ENCODE measurements at regions of chr6 and their contacts with region 1.

Region 1: GRCh38 chr6:29737707-29738630 is 14.7 kb downstream of the HLA-F start:
- H3K4me3 ChIP-seq: no peak overlapping the region
- H3K27ac ChIP-seq: no peak overlapping the region
- H3K4me1 ChIP-seq: no peaks in the 10 kb centered on the region
- CTCF ChIP-seq: peak; percentile 87

Region 2: GRCh38 chr6:29509239-29509638 is 228.7 kb before region 1 on chr6:
- CTCF ChIA-PET with region 1: no interaction called
- POLR2A ChIA-PET with region 1: no interaction called
- H3K4me3 ChIP-seq: no peak overlapping the region
- H3K27ac ChIP-seq: no peak overlapping the region
- H3K4me1 ChIP-seq: peaks cover 8% of the 10 kb centered on the region; the same call in 1 of the 2 replicates
- CTCF ChIP-seq: no peak

Region 3: DNA sequence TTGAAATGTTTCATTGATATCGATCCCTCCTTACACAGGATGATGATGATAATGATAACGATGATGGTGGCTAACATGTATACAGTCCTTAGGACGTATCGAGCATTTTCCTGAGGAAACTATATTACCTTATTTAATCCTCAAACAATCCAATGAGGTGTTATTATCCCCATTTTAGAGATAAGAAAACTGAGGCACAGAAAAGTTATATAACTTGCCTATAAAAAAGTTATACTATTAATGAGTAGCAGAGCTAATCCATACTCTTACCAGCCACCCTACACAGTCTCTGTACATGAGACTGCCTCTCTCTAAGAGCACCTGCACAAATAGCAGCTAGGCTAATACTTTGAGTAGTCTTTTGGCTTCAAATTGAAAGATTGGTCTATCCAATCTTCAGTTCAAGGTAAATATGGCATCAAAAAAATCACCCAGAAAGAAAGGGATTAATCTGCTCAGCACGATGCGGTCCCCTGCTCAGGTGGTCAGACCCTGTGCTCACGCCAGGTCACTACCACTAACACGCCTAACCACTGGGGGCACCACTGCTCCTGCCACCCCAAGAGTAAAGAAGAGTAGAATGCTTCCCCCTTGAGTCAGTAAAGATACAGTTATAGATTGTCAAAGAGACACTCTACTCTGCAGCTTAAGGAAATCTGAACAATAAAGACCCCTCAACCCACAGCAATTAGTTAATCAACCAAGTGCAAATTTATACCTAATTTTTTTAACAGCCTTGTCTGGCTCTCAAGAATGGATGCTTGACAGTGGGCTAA is 120.0 kb before region 1 on chr6:
- CTCF ChIA-PET with region 1: no interaction called
- POLR2A ChIA-PET with region 1: no interaction called
- H3K4me3 ChIP-seq: no peak overlapping the region
- H3K27ac ChIP-seq: no peak overlapping the region
- H3K4me1 ChIP-seq: no peaks in the 10 kb centered on the region
- CTCF ChIP-seq: no peak

Region 4: GRCh38 chr6:29720863-29721262 is 17.1 kb before region 1 on chr6:
- CTCF ChIA-PET with region 1: interaction called, 10 read pairs
- POLR2A ChIA-PET with region 1: no interaction called
- H3K4me3 ChIP-seq: no peak overlapping the region
- H3K27ac ChIP-seq: no peak overlapping the region
- H3K4me1 ChIP-seq: no peaks in the 10 kb centered on the region; the same call in 1 of the 2 replicates
- CTCF ChIP-seq: no peak

Region 5: DNA sequence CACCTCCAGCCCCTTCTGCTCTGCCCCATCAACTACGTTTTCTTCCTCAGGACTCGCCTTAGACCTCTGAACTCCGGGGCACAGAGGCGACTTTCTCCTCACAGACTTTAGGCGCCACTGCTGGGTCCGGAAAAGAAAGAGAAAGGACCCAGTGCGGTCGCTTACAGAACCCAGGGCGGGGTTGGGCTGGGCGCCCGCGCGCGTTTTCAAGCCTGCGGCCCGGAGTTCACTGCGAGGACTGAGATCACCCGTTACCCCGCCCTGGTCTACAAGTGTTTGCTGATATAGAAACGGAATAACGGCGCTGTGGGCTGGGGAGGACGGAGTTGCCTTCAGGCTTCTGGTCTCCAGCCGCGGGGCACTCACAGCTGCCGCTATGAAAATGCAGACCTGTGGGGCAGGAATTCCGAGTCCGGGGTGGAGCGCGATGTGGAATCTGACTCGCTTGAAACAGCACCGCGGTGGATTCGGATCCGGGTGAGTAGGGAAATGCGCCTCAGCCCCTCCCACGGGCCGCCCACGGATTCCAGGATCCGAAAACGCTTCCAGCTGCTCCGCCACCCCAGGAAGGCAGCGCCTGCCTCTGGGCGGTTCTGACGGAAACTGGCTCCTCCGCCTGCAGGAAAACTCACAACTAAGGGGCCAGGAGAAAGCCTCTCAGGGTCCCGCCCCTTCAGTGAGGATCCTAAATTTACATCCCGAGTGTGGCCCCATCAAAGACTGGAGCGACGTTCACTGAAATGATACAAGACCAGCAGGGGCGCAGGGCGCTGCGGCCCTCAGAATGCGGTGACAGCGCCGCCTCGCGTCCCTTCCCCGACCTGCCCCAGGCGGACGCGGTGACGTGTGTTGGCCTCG is 14.7 kb after region 1 on chr6:
- CTCF ChIA-PET with region 1: interaction called, 127 read pairs
- POLR2A ChIA-PET with region 1: interaction called, 3 read pairs
- H3K4me3 ChIP-seq: peak overlapping the region; percentile 75
- H3K27ac ChIP-seq: peak overlapping the region; percentile 46; the same call in 1 of the 2 replicates
- H3K4me1 ChIP-seq: peaks cover 5% of the 10 kb centered on the region; the same call in 1 of the 2 replicates
- CTCF ChIP-seq: peak; percentile 99

Region 6: GRCh38 chr6:29827579-29828470 is 89.9 kb after region 1 on chr6 and contains the start of gene HLA-G:
- CTCF ChIA-PET with region 1: interaction called, 158 read pairs
- POLR2A ChIA-PET with region 1: no interaction called
- H3K4me3 ChIP-seq: no peak within 1 kb of the TSS
- H3K27ac ChIP-seq: no peak within 1 kb of the TSS
- H3K4me1 ChIP-seq: no peaks in the 10 kb centered on the region
- CTCF ChIP-seq: no peak

Region 7: DNA sequence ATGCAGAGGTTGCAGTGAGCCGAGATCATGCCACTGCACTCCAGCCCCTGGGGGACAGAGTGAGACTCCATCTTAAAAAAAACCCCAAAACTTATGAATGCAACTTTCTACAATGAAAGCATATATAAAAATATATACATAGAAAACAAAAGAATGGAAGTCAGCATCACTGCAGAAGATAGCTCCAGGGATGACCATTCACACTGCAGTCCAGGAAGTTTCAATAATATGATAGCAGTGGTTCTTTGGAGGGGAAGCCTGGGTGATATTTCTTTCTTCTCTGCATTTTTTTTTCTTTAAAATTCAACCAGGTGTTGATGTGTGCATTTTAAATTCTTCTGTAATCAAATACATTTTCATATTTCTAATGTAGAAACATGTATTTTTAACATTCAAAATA is 101.9 kb after region 1 on chr6:
- CTCF ChIA-PET with region 1: interaction called, 158 read pairs
- POLR2A ChIA-PET with region 1: no interaction called
- H3K4me3 ChIP-seq: no peak overlapping the region
- H3K27ac ChIP-seq: no peak overlapping the region
- H3K4me1 ChIP-seq: no peaks in the 10 kb centered on the region
- CTCF ChIP-seq: no peak

Region 8: DNA sequence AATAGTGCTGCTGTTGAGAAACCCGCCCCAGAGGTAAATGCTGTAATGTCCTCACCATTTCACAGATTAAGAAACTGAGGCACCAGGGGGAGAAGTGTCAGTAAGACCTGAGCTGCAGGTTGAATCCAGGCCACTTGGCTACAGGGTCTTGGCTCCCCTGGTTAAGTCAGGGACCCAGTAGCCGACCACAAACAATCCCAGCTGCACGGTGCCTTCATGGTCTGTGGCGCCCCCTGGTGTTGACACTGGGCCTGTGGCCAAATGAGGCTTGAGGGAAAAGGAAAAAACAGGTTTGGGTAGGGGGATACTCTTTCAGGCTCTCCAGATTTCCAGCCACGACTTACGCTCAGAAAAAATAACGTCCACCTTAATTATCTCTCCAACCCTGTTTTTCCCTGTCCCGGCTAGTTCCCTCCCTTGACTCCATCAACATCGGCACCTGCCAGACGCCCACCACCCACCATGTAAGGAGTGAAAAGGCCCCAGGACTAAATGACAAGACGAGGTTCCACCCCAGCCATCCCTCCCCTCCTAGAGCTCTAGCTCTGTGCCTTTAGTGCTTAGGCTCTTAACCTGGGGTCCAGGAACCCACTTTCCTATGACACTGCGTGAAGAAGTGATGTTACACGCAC is 275.4 kb after region 1 on chr6:
- CTCF ChIA-PET with region 1: interaction called, 13 read pairs
- POLR2A ChIA-PET with region 1: no interaction called
- H3K4me3 ChIP-seq: no peak overlapping the region
- H3K27ac ChIP-seq: no peak overlapping the region
- H3K4me1 ChIP-seq: no peaks in the 10 kb centered on the region
- CTCF ChIP-seq: peak; percentile 67; the same call in 1 of the 2 replicates